Left cardiac atrium (tissue), 4 donors: ENCODE measurements at regions of chr14 and their contacts with region 1.

Region 1: DNA sequence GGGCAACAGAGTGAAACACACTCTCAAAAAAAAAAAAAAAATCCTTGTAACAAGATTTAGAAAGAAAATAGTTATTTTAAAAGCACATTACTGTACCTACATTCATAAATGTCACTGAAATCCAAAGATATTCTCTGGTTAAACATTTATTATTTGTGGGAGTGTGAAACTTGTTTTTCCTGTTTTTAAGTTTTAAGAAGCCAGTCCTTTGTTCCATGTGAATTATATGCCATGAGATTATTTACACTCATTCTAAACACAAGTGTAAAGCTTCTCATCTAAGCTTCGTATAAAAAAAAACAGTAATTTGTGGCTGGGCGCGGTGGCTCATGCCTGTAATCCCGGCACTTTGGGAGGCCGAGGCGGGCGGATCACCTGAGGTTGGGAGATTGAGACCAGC is 15.0 kb downstream of the VCPKMT start:
- DNase-seq: no peak
- ATAC-seq: no peak

Region 2: DNA sequence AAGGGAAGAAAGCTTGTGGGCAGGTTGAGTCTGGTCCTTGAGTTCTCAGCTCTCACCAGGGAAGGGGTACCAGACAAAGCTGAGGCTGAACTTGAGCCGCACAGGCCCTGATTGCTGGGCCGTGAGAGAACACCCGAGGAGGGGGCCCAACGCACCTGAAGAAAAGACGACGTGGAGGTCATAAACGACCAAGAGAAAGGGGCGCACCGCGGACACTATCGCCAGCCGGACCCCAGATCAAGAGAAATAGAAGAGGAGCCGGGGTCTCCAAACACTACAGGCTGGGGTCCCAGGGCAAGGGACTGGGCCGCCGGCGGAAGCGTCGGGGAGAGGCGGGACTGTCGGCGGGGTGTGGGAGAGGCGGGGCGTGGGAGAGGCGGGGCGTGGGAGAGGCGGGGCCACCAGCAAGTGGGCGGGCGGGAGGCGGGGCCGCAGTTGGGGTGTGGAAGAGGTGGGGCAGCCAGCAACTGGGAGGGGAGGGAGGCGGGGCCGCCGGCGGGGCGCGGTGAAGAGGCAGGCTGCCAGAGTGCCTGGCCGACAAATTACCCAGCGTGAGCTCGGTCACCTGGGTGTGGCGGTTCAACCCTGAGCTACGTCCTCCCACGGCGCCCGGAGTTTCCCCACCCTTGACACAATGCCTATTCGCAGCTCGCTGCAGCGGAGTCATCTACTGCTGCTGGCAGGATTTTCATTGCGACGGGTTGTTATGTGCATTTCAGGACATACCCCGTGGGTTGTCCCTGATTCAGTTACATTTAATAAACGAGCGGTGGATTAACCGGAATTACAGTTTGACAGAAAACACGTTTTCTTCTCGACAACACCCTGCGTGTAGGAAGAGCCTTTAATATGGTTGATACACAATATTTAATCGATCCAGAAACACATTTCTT is 233.3 kb before region 1 on chr14:
- intact Hi-C with region 1: loop called (anchors 5 kb)
- DNase-seq: peak; percentile 97
- ATAC-seq: peak; percentile 97 to 98

Region 3: DNA sequence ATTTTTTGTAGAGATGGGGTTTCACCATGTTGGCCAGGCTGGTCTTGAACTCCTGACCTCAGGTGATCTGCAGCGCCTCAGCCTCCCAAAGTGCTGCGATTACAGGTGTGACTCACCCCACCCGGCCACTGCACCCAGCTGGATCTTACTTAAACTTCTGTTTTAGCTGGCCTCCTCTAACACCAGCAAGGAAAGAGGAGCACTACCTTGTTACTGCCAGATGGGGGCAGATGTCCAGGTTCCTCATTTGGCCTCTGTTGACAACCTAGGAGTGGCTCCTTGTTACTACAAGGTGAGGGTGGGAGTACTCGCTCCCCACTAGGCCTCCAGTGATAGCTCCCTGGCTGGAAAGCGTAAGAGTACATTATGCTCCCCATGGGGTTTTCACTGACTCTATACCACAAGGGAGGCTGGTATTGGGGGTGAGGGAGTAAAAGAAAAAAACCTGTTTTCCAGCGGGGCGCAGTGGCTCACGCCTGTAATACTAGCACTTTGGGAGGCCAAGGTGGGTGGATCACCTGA is 221.7 kb before region 1 on chr14:
- intact Hi-C with region 1: loop called (anchors 5 kb)
- DNase-seq: no peak
- ATAC-seq: peak; percentile 72 to 85